ENCODE measurements at regions of chr11 and their contacts with region 1.

Region 1: GRCh38 chr11:103157542-103157941 is 48.3 kb downstream of the DYNC2H1 start:
- DNase-seq: no peak
- ATAC-seq: no peak
- H3K4me3 ChIP-seq: no peak overlapping the region
- H3K27ac ChIP-seq: no peak overlapping the region
- H3K4me1 ChIP-seq: no peaks in the 10 kb centered on the region
- H3K27me3 ChIP-seq: no peaks in the 10 kb centered on the region
- CTCF ChIP-seq: no peak

Region 2: DNA sequence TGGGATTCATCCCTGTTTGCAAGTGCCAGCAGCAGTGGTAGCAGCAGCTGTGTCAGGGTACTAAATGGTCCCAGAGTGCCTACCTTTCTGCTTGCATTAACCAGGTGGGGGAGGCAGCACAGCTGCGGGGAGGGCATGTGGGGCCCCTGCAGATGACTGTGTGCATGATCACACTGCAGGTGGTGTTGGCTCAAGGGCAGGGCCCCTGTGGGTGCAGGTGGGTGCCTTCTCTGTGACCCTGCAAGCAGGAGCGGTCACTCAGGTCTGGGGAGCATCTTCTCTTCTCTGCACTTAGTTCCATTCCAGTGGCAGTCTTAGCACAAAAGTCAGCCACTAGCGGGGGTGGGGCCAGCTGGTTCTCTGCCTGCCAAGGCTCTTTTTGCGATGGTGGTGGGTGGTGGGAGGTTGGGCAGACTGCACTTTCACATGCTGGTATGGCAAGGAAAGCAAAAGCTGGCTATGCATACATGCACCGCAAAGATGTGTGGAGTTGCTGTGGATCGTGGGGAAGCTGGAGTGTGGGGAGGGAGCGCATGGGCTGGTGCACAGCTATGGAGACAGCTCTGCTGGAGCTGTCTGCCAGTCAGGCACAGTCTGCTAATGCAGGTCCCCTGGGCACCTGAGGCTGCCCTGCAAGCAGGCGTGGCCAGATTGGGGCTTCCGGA is 108.8 kb after region 1 on chr11:
- CTCF ChIA-PET with region 1: interaction called, 13 read pairs
- POLR2A ChIA-PET with region 1: no interaction called
- in situ Hi-C with region 1: no loop called
- intact Hi-C with region 1: no loop called
- DNase-seq: no peak
- ATAC-seq: no peak
- H3K4me3 ChIP-seq: no peak overlapping the region
- H3K27ac ChIP-seq: no peak overlapping the region
- H3K4me1 ChIP-seq: no peaks in the 10 kb centered on the region
- H3K27me3 ChIP-seq: no peaks in the 10 kb centered on the region
- CTCF ChIP-seq: no peak